Natural killer cell (primary cell): ENCODE measurements at regions of chr11 and their contacts with region 1.

Region 1: GRCh38 chr11:87421422-87421821 is 383.7 kb downstream of the TMEM135 start:
- DNase-seq: peak in 1 of 2 donors; percentile 75
- ATAC-seq: peak in 2 of 3 donors; percentile 55 to 74
- H3K4me3 ChIP-seq: no peak overlapping the region
- H3K4me3 Mint-ChIP-seq: no peak overlapping the region
- H3K27ac ChIP-seq: no peak overlapping the region
- H3K27ac Mint-ChIP-seq: no peak overlapping the region
- H3K4me1 ChIP-seq: no peaks in the 10 kb centered on the region
- H3K4me1 Mint-ChIP-seq: no peaks in the 10 kb centered on the region
- H3K27me3 ChIP-seq: no peaks in the 10 kb centered on the region
- H3K27me3 Mint-ChIP-seq: peaks cover 2 to 12% of the 10 kb centered on the region in 2 donors
- CTCF ChIP-seq: peak; percentile 84

Region 2: DNA sequence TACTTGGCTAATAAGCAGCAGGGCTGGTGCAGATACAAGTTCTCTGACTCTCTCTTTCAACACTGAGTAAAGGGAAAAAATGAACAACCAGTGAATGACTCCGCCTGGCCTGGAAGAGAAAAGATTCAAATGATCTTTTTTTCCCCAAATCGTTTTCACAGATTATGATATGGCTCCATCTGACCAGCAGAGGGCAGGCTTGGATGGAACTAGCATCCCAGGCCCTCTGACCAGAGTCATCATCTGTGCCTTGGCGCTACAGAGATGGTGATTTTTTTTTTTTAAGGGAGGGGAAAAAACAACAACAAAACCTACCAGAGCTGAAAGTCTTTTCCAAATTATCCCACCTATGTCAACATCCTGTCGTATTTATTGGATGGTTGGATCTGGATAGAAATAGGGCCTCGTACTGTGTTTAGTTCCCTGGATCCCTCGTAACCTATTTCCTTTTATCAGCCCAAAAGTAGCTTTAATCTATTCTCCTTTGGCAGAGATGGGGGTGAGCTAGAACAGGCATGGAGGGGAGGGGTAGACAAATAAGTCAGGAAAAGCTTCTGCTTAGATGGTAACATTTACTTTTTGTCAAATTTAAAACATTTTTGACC is 551.4 kb before region 1 on chr11:
- intact Hi-C with region 1: loop called (anchors 5 kb)
- DNase-seq: peak; percentile 22 to 57
- ATAC-seq: peak; percentile 68 to 84 (median 72)
- H3K4me3 ChIP-seq: no peak overlapping the region
- H3K4me3 Mint-ChIP-seq: no peak overlapping the region
- H3K27ac ChIP-seq: no peak overlapping the region
- H3K27ac Mint-ChIP-seq: no peak overlapping the region
- H3K4me1 ChIP-seq: no peaks in the 10 kb centered on the region
- H3K4me1 Mint-ChIP-seq: no peaks in the 10 kb centered on the region
- H3K27me3 ChIP-seq: no peaks in the 10 kb centered on the region
- H3K27me3 Mint-ChIP-seq: no peaks in the 10 kb centered on the region
- CTCF ChIP-seq: peak; percentile 75

Region 3: DNA sequence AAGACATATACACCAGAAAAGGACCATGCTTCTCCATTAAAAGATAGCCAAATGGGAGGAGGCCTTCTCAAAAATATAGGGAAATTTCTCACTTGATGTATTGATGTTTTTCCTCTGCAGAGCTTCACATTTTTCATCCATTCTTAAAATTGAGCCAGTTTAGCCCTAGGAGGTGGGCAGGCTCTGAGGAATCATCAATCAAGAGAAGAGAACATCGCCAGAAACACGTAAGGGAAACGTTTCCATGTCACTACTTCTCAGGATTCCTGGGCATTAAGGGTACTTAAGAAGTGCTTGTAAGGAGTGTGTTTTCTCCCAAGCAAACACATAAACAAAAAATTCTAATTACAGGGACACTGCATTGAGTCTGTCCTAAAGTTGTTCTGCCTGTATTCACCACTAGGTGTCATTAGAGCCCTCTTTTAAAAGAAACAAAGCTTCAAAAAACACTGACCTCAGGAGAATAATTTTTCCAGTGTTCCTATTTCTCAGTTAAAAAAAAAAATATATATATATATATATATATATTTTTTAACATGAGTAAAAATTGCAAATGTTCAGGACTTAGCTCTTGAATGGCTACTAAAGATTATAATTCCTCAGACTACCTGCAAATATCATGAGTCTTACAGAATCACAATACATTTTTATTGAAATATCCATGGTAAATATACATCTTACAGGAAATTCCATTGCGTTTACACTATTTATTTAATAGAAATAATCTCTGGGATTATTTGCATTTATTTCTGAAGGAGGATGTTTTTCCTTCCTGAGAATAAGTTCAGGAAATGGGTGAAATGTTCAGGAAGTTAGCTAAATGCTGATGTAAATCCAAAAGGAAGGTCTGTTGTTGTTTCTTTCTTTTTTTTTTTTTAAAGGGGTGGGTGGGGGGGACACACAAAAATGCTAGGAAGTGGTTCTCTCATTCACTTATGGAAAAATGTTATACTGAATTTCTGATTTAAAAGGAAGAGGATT is 482.2 kb before region 1 on chr11:
- intact Hi-C with region 1: loop called (anchors 1 kb)
- DNase-seq: peak in 1 of 2 donors; percentile 66
- ATAC-seq: peak in 2 of 3 donors; percentile 58 to 69
- H3K4me3 ChIP-seq: no peak overlapping the region
- H3K4me3 Mint-ChIP-seq: no peak overlapping the region
- H3K27ac ChIP-seq: no peak overlapping the region
- H3K27ac Mint-ChIP-seq: no peak overlapping the region
- H3K4me1 ChIP-seq: no peaks in the 10 kb centered on the region
- H3K4me1 Mint-ChIP-seq: no peaks in the 10 kb centered on the region
- H3K27me3 ChIP-seq: no peaks in the 10 kb centered on the region
- H3K27me3 Mint-ChIP-seq: peaks cover 6 to 7% of the 10 kb centered on the region in 2 donors
- CTCF ChIP-seq: peak; percentile 76

Region 4: DNA sequence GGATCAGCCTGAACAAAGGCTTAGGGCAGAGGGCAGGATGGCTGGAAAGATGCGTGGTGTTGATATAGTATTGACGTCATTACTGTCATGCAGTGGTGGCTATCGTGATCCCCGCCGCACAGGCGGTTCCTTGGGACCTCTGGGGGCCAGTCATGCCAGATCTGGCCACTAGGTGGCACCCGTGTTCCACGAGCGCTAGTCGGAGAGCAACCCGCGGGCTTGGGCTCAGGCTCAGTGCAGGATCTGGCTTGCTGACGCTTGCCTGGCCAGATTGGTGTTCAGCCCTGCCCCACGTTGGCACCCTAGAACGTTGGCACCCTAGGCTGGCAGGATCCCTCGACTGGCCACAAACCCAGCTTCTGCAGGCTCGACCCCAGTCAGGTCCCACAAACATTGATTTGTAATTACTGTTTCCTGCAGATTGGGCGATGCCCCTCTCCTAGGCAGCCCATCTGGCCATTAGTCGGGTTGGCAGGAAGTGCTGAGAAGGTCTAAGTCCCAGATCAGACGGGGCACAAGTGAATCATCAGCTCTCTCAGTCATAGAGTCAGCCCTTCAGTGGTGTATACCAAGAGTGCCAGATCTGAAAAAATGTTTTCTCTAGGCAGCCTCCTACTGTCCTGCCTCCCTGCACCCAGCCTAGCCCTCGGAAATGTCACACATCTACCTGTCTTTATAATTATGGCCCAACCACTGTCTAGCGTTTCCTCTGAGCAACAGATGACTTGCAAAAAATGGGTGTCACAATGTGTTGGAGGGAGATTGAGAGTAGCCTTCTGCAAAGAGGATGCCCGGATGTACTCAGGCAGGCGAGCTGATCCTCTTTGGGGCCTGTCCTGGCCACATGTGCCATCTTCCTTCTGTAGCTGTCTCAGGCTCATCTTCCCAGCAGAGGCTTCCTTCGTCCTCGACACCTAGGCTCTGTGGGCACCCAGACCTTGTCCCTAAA is 68.4 kb before region 1 on chr11:
- intact Hi-C with region 1: loop called (anchors 1 kb)
- DNase-seq: peak; percentile 82 to 86
- ATAC-seq: peak; percentile 95 to 98 (median 95)
- H3K4me3 ChIP-seq: no peak overlapping the region
- H3K4me3 Mint-ChIP-seq: no peak overlapping the region
- H3K27ac ChIP-seq: no peak overlapping the region
- H3K27ac Mint-ChIP-seq: peak overlapping the region in 1 of 2 donors; percentile 25
- H3K4me1 ChIP-seq: peaks cover 8% of the 10 kb centered on the region
- H3K4me1 Mint-ChIP-seq: peaks cover 0 to 14% of the 10 kb centered on the region in 2 donors
- H3K27me3 ChIP-seq: no peaks in the 10 kb centered on the region
- H3K27me3 Mint-ChIP-seq: no peaks in the 10 kb centered on the region
- CTCF ChIP-seq: peak; percentile 92